ENCODE measurements at regions of chr7 and their contacts with region 1.

Region 1: DNA sequence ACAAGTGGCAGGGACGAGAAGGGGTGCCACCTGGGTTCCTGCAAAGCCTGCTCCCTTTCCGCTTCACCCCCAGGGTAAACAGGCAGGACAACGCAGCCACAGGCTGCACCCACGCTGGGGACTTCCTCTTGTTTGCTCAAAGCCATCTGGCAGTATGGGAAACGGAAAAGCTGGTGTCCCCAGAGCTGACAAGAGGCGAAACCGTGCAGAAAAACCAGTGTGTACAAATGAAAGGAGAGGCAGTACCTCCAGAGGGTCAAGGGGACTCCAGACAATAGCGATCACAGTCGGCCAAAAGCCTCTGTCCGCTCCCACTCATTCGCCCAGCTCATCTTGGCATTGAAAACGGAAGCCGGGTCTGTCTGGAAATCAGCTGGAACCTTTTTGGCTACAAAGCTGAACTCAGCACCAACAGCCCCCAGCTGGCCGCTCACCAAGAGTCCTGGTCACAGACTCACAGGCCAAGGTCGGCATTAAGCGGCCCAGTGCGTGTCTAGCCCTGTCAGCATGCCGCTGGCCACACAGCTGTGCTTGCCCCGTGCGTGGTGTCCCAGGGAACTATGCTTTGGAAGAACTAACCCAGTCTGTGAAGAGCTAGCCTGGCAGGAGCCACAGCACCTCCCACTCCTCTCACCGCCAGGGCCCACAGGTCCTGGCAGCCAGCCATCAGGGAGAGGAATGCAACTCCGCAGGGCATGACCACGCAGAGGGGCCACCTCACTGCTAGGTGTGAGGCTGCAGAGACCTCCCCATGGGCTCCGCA is 10.4 kb downstream of the TNS3 start:
- DNase-seq: peak; percentile 91
- H3K4me3 ChIP-seq: no peak overlapping the region
- H3K27ac ChIP-seq: peak overlapping the region; percentile 82 to 84
- H3K4me1 ChIP-seq: peaks cover 84% of the 10 kb centered on the region
- H3K27me3 ChIP-seq: no peaks in the 10 kb centered on the region
- CTCF ChIP-seq: no peak
- POLR2A ChIP-seq: no peak

Region 2: GRCh38 chr7:47622946-47623640 is 51.6 kb after region 1 on chr7:
- intact Hi-C with region 1: loop called (anchors 10 kb)
- DNase-seq: peak; percentile 54
- H3K4me3 ChIP-seq: no peak overlapping the region
- H3K27ac ChIP-seq: peak overlapping the region in 1 of 2 donors; percentile 41
- H3K4me1 ChIP-seq: peaks cover 11% of the 10 kb centered on the region
- H3K27me3 ChIP-seq: no peaks in the 10 kb centered on the region
- CTCF ChIP-seq: no peak
- POLR2A ChIP-seq: no peak

Region 3: GRCh38 chr7:47751043-47751442 is 179.5 kb after region 1 on chr7:
- intact Hi-C with region 1: no loop called
- DNase-seq: no peak
- H3K4me3 ChIP-seq: no peak overlapping the region
- H3K27ac ChIP-seq: no peak overlapping the region
- H3K4me1 ChIP-seq: no peaks in the 10 kb centered on the region
- H3K27me3 ChIP-seq: no peaks in the 10 kb centered on the region
- CTCF ChIP-seq: no peak
- POLR2A ChIP-seq: no peak